K562 (cell line): ENCODE measurements at regions of chr17 and their contacts with region 1.

Region 1: DNA sequence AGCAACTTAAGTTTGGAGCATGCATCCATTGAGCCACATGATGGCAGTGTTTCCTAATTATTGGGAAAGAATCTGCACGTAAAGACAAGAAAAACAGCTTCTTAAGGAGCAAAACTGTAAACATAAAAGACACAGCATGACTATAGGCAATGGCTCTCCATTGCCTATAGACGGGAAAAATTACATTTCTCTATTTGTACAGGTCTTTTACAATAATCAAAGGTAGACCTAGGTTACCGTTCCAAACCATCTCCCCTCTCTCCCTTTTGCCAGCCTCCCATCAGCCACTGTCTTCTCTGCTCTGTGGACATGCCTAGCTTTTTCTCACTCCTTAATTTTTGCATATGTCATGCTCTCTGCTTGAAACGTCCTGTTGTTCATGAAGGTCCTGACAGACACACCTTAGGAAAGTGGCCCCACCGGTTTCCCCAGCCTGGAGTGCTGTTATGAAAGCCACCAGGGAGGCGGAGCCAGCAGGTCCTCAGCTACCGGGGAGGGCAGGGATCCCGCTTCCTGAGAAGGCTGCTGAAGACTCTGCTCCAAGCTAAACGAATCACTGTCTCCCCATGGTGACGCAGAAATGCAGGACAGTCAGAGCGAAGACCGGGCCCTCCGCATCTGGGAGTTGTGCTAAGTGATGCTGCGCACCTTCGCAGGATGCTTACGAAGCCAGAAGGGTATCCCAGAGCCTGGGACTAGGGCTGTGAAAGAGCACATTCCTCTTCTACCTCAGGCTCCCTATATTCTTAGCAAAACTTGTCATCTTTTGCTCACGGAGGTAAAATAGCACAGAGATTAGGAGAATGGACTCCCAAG is 2.2 kb upstream of the SLC16A11 start:
- DNase-seq: peak in 1 of 4 experiments; percentile 65
- ATAC-seq: peak; percentile 76
- H3K4me3 ChIP-seq: no peak overlapping the region
- H3K27ac ChIP-seq: no peak overlapping the region
- H3K4me1 ChIP-seq: peaks cover 0 to 26% of the 10 kb centered on the region in 2 experiments; a peak in 4 of 5 replicates
- H3K27me3 ChIP-seq: peaks cover 0 to 5% of the 10 kb centered on the region in 2 experiments; a peak in 4 of 5 replicates
- CTCF ChIP-seq: peak; percentile 45 to 82 (median 62); a peak in 5 of 6 replicates
- EP300 ChIP-seq: no peak
- POLR2A ChIP-seq: no peak
- RAD21 ChIP-seq: peak; percentile 83 to 91

Region 2: DNA sequence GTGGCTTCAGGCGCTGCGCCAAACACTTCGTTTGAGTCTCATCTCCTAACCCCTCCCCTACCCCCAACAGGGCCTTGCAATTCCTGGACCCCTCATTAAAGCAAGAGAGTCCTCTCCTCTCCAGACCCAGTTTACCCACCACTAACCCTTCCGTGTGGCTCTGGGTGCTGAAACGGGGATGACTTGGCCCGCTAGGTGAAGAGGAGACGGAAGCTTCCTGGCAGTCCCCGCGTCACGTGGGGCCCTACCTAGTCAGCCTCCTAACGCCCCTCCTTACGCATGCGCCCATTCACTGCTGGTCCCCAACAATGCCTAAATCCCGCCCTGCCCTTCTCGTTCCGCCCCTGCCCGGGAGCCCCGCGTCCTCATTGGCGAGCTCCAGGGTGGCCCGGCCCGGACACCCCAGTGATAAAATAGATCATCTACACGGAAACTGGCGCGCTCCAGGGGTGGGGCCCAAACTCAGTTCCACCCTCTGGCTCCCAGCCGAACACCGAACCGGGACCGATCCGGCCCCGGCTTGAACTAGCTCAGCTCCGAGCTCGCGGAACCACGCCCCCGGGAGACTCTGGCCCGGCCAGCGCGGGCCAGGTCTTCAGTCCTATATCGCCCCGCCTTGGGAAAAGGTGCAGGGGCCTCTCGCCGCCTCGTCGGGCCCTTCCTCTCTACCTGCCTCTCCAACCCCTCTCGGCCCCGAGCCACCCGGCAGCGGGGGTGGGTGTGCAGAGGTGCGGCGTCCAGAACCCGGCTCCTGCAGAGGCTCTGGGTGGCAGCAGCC is 10.3 kb before region 1 on chr17 and contains the start of gene SLC16A13:
- CTCF ChIA-PET with region 1: no interaction called
- POLR2A ChIA-PET with region 1: interaction called, 10 read pairs
- in situ Hi-C with region 1: no loop called
- intact Hi-C with region 1: no loop called
- DNase-seq: peak; percentile 95 to 99 (median 96)
- ATAC-seq: peak; percentile 95
- H3K4me3 ChIP-seq: peak within 1 kb of the TSS; percentile 77
- H3K27ac ChIP-seq: peak within 1 kb of the TSS; percentile 90
- H3K4me1 ChIP-seq: peaks cover 11 to 20% of the 10 kb centered on the region in 2 experiments; a peak in 4 of 5 replicates
- H3K27me3 ChIP-seq: no peaks in the 10 kb centered on the region
- CTCF ChIP-seq: no peak
- EP300 ChIP-seq: no peak
- POLR2A ChIP-seq: peak; percentile 94
- RAD21 ChIP-seq: no peak
- polyA plus RNA-seq, gene SLC16A13: 0.04 to 0.18 TPM

Region 3: GRCh38 chr17:7136266-7136877 is 90.3 kb after region 1 on chr17:
- CTCF ChIA-PET with region 1: interaction called, 41 read pairs
- POLR2A ChIA-PET with region 1: no interaction called
- in situ Hi-C with region 1: loop called (anchors 5 kb)
- intact Hi-C with region 1: loop called (anchors 1 kb)
- DNase-seq: peak; percentile 53 to 72 (median 68)
- ATAC-seq: no peak
- H3K4me3 ChIP-seq: no peak overlapping the region
- H3K27ac ChIP-seq: no peak overlapping the region
- H3K4me1 ChIP-seq: peaks cover 0 to 8% of the 10 kb centered on the region in 2 experiments; a peak in 2 of 5 replicates
- H3K27me3 ChIP-seq: peaks cover 16 to 41% of the 10 kb centered on the region in 2 experiments
- CTCF ChIP-seq: peak; percentile 72 to 80 (median 75)
- EP300 ChIP-seq: no peak
- POLR2A ChIP-seq: no peak
- RAD21 ChIP-seq: peak; percentile 77

Region 4: GRCh38 chr17:7177196-7177953 is 131.3 kb after region 1 on chr17:
- CTCF ChIA-PET with region 1: interaction called, 11 read pairs
- POLR2A ChIA-PET with region 1: no interaction called
- in situ Hi-C with region 1: no loop called
- intact Hi-C with region 1: no loop called
- DNase-seq: peak; percentile 75 to 84 (median 76)
- ATAC-seq: peak; percentile 95
- H3K4me3 ChIP-seq: peak overlapping the region; percentile 36
- H3K27ac ChIP-seq: no peak overlapping the region; the same call in 2 of the 3 replicates
- H3K4me1 ChIP-seq: peaks cover 3 to 26% of the 10 kb centered on the region in 2 experiments; a peak in 3 of 5 replicates
- H3K27me3 ChIP-seq: peaks cover 0 to 14% of the 10 kb centered on the region in 2 experiments; a peak in 2 of 5 replicates
- CTCF ChIP-seq: peak; percentile 75 to 84 (median 78)
- EP300 ChIP-seq: no peak
- POLR2A ChIP-seq: no peak
- RAD21 ChIP-seq: peak; percentile 66 to 71

Region 5: DNA sequence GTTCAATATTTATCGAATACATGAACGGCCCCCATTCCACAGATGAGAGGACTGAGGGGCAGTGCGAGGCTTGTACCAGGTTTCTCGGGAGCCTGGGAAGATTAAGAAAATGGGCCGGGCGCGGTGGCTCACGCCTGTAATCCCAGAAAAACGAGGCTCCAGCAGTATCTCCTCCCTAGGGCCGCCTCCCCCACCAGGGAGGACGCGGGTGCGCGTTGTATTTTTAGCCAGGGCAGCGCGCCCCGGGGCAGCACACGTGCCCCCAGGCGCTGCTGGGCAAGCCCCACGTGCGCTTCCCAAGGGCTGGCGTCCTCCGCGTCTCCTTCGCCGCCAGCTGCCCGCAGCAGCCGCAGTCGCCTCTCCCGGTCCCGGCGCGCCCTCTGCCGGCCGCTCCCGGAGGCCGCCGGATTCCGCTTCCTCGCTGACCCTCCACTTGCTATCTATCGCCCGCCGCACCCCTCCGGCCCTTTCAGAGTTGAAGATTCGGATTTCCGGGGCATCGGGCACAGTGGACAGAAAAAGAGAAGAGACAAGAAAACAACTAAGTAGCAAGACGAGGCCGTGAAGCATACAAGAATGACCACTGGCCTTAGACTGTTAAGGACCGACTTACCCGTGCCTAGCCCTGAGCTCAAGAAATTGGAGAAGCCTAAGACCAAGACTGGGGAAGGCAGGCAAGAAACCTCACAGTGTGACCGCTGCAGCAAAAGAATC is 250.2 kb after region 1 on chr17:
- CTCF ChIA-PET with region 1: no interaction called
- POLR2A ChIA-PET with region 1: interaction called, 3 read pairs
- in situ Hi-C with region 1: no loop called
- intact Hi-C with region 1: loop called (anchors 5 kb)
- DNase-seq: peak; percentile 74 to 83 (median 76)
- ATAC-seq: peak; percentile 90
- H3K4me3 ChIP-seq: no peak overlapping the region
- H3K27ac ChIP-seq: no peak overlapping the region
- H3K4me1 ChIP-seq: peaks cover 17 to 42% of the 10 kb centered on the region in 2 experiments
- H3K27me3 ChIP-seq: no peaks in the 10 kb centered on the region
- CTCF ChIP-seq: peak; percentile 78 to 90 (median 81)
- EP300 ChIP-seq: no peak
- POLR2A ChIP-seq: no peak
- RAD21 ChIP-seq: peak; percentile 88 to 93

Region 6: DNA sequence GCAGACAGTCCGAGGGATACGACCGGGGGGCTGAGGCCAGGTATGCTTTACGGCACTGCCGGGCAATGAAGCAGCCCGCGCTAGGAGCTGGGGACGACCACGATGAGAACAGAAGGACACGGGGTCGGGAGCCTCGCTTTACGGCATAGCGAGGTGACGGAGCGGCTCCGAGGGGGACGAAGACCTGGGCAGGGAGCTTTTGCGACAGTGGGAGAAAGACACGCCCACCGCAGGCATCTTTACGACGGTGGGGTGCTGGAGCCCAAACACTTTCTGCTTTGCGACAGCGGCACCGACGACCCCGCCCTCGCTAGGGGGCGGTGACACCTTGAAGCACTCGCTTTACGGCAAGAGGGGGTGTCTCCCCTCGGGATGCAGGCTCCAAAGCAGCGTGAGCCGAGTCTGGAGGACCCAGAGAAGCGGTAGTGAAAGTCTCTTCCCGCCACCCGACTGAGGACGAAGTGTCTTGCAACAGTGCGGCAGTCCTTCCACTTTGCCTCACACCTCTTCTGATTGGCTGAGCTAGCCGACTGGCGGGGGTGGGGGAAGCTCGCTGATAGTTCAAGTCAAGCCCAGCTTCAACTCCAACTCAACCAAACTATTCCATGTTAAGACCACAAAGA is 283.4 kb after region 1 on chr17:
- CTCF ChIA-PET with region 1: no interaction called
- POLR2A ChIA-PET with region 1: no interaction called
- in situ Hi-C with region 1: loop called (anchors 10 kb)
- intact Hi-C with region 1: no loop called
- DNase-seq: peak; percentile 93 to 97 (median 95)
- ATAC-seq: peak; percentile 83
- H3K4me3 ChIP-seq: peak overlapping the region; percentile 78
- H3K27ac ChIP-seq: peak overlapping the region; percentile 92
- H3K4me1 ChIP-seq: peaks cover 15 to 37% of the 10 kb centered on the region in 2 experiments
- H3K27me3 ChIP-seq: no peaks in the 10 kb centered on the region
- CTCF ChIP-seq: no peak
- EP300 ChIP-seq: no peak
- POLR2A ChIP-seq: peak; percentile 70
- RAD21 ChIP-seq: no peak